Activated T-helper 2 cell treated with anti-CD3 and anti-CD28 coated beads, Interferon-gamma antibody, Interleukin-2, Interleukin-4, amounts not matched to agents 10 μg/mL and 5 μg/mL and 100 μg/mL, durations not matched to agents 14 hours and 24 hours and 36 hours (primary cell): ENCODE measurements at regions of chr15 and their contacts with region 1.

Region 1: GRCh38 chr15:64651573-64652260 is 123.7 kb downstream of the RBPMS2 start:
- DNase-seq: no peak
- H3K4me3 Mint-ChIP-seq: no peak overlapping the region
- H3K27ac Mint-ChIP-seq: peak overlapping the region; percentile 7
- H3K4me1 Mint-ChIP-seq: peaks cover 27% of the 10 kb centered on the region
- H3K27me3 Mint-ChIP-seq: no peaks in the 10 kb centered on the region

Region 2: GRCh38 chr15:64634576-64635498 is 16.9 kb before region 1 on chr15:
- intact Hi-C with region 1: loop called (anchors 2 kb)
- DNase-seq: peak; percentile 23
- H3K4me3 Mint-ChIP-seq: peak overlapping the region; percentile 54
- H3K27ac Mint-ChIP-seq: peak overlapping the region; percentile 85
- H3K4me1 Mint-ChIP-seq: peaks cover 57% of the 10 kb centered on the region
- H3K27me3 Mint-ChIP-seq: no peaks in the 10 kb centered on the region